ENCODE measurements at regions of chr9 and their contacts with region 1.

Region 1: GRCh38 chr9:117718085-117718484 is 13.9 kb downstream of the TLR4 start:
- DNase-seq: peak; percentile 81
- ATAC-seq: peak; percentile 97
- H3K4me3 ChIP-seq: peak overlapping the region in 1 of 5 experiments; percentile 17
- H3K4me3 Mint-ChIP-seq: peak overlapping the region; percentile 53
- H3K27ac ChIP-seq: no peak overlapping the region
- H3K27ac Mint-ChIP-seq: no peak overlapping the region
- H3K4me1 ChIP-seq: peaks cover 17 to 20% of the 10 kb centered on the region in 2 donors
- H3K4me1 Mint-ChIP-seq: peaks cover 24% of the 10 kb centered on the region
- H3K27me3 ChIP-seq: peaks cover 0 to 12% (median 9%) of the 10 kb centered on the region in 4 experiments
- H3K27me3 Mint-ChIP-seq: peaks cover 2% of the 10 kb centered on the region
- CTCF ChIP-seq: no peak

Region 2: DNA sequence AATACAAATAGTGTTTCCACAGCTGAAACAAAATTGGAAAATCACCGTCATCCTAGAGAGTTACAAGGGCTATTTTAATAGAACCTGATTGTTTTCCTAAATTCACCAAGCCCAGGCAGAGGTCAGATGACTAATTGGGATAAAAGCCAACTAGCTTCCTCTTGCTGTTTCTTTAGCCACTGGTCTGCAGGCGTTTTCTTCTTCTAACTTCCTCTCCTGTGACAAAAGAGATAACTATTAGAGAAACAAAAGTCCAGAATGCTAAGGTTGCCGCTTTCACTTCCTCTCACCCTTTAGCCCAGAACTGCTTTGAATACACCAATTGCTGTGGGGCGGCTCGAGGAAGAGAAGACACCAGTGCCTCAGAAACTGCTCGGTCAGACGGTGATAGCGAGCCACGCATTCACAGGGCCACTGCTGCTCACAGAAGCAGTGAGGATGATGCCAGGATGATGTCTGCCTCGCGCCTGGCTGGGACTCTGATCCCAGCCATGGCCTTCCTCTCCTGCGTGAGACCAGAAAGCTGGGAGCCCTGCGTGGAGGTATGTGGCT is 14.0 kb before region 1 on chr9 and contains the start of gene TLR4:
- CTCF ChIA-PET with region 1: interaction called, 3 read pairs
- POLR2A ChIA-PET with region 1: interaction called, 3 read pairs
- intact Hi-C with region 1: loop called (anchors 1 kb)
- DNase-seq: peak; percentile 86
- ATAC-seq: peak; percentile 97
- H3K4me3 ChIP-seq: peak within 1 kb of the TSS; percentile 25 to 69 (median 57)
- H3K4me3 Mint-ChIP-seq: peak within 1 kb of the TSS; percentile 86
- H3K27ac ChIP-seq: peak within 1 kb of the TSS; percentile 52 to 59
- H3K27ac Mint-ChIP-seq: peak within 1 kb of the TSS; percentile 73
- H3K4me1 ChIP-seq: peaks cover 23% of the 10 kb centered on the region in 2 donors
- H3K4me1 Mint-ChIP-seq: peaks cover 41% of the 10 kb centered on the region
- H3K27me3 ChIP-seq: no peaks in the 10 kb centered on the region
- H3K27me3 Mint-ChIP-seq: no peaks in the 10 kb centered on the region
- CTCF ChIP-seq: no peak
- total RNA-seq, gene TLR4: 3.7 and 4.5 TPM in 2 replicates

Region 3: GRCh38 chr9:117825609-117826347 is 107.7 kb after region 1 on chr9:
- CTCF ChIA-PET with region 1: no interaction called
- POLR2A ChIA-PET with region 1: no interaction called
- intact Hi-C with region 1: loop called (anchors 10 kb)
- DNase-seq: peak; percentile 81
- ATAC-seq: peak; percentile 95
- H3K4me3 ChIP-seq: peak overlapping the region in 2 of 5 experiments; percentile 24 to 46
- H3K4me3 Mint-ChIP-seq: peak overlapping the region; percentile 71
- H3K27ac ChIP-seq: no peak overlapping the region
- H3K27ac Mint-ChIP-seq: peak overlapping the region; percentile 74
- H3K4me1 ChIP-seq: peaks cover 31 to 33% of the 10 kb centered on the region in 2 donors
- H3K4me1 Mint-ChIP-seq: peaks cover 35% of the 10 kb centered on the region
- H3K27me3 ChIP-seq: peaks cover 0 to 23% (median 1%) of the 10 kb centered on the region in 4 experiments
- H3K27me3 Mint-ChIP-seq: peaks cover 20% of the 10 kb centered on the region
- CTCF ChIP-seq: no peak

Measured in B cell (primary cell).